ENCODE measurements at regions of chr7 and their contacts with region 1.

Region 1: DNA sequence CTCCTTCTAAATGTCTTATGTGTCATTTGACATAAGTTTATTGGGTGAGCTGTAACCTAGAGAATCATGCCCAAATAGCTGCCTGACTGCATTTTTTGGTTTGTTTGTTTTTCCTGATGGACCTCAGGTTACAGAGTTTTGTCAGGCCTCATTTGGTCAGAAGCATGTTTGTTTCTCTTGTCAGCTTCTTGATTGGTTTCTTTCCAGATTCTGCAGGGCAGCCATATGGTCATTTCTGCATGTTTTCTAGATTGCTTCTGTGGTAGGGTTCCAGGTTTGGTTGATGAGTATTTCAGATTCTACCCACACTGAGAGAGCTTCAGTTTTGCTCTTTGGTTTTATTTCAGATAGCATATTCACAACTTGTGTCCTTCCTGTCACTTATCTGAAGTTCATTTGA is 28.0 kb downstream of the GLCCI1 start:
- DNase-seq: no peak
- H3K4me3 Mint-ChIP-seq: no peak overlapping the region
- H3K27ac Mint-ChIP-seq: peak overlapping the region; percentile 11
- H3K4me1 Mint-ChIP-seq: peaks cover 23% of the 10 kb centered on the region
- H3K27me3 Mint-ChIP-seq: no peaks in the 10 kb centered on the region

Region 2: GRCh38 chr7:8015100-8015748 is 18.6 kb after region 1 on chr7:
- CTCF ChIA-PET with region 1: interaction called, 3 read pairs
- POLR2A ChIA-PET with region 1: no interaction called
- intact Hi-C with region 1: loop called (anchors 2 kb)
- DNase-seq: no peak
- H3K4me3 Mint-ChIP-seq: no peak overlapping the region
- H3K27ac Mint-ChIP-seq: peak overlapping the region; percentile 56
- H3K4me1 Mint-ChIP-seq: peaks cover 40% of the 10 kb centered on the region
- H3K27me3 Mint-ChIP-seq: no peaks in the 10 kb centered on the region

Region 3: DNA sequence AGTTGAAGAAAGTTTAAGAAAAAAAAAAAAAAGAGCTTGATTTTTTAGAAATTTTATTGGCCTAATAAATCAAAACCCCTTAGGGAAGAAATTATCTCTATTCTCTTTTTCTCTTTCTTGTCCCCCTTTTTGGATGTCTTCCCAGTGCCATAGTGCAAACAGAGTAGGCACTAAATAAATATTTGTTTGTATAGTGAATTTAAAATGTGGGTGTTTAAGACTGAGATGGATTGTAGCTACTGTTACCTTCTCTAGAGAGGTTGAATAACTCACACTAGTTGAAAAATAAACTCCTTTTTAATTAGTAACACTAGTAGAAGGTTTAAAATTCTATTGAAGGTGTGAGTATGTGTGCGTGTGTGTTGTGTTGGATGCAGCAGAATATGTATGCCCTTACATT is 1220.6 kb after region 1 on chr7:
- CTCF ChIA-PET with region 1: no interaction called
- POLR2A ChIA-PET with region 1: no interaction called
- intact Hi-C with region 1: no loop called
- DNase-seq: no peak
- H3K4me3 Mint-ChIP-seq: no peak overlapping the region
- H3K27ac Mint-ChIP-seq: no peak overlapping the region
- H3K4me1 Mint-ChIP-seq: no peaks in the 10 kb centered on the region
- H3K27me3 Mint-ChIP-seq: no peaks in the 10 kb centered on the region